Activated CD4-positive, alpha-beta T cell treated with anti-CD3 and anti-CD28 coated beads, Interleukin-2, amount 10 ng/mL, durations not matched to agents 7 days and 5 days (primary cell): ENCODE measurements at regions of chr17 and their contacts with region 1.

Region 1: GRCh38 chr17:63919311-63919723 is 678 bp upstream of the GH1 start:
- DNase-seq: peak; percentile 83
- H3K4me3 Mint-ChIP-seq: no peak overlapping the region
- H3K27ac Mint-ChIP-seq: no peak overlapping the region
- H3K4me1 Mint-ChIP-seq: peaks cover 7% of the 10 kb centered on the region
- H3K27me3 Mint-ChIP-seq: peaks cover 4% of the 10 kb centered on the region

Region 2: GRCh38 chr17:63931099-63931561 is 11.8 kb after region 1 on chr17:
- CTCF ChIA-PET with region 1: interaction called, 33 read pairs
- POLR2A ChIA-PET with region 1: no interaction called
- DNase-seq: peak; percentile 65
- H3K4me3 Mint-ChIP-seq: peak overlapping the region; percentile 95
- H3K27ac Mint-ChIP-seq: peak overlapping the region; percentile 95
- H3K4me1 Mint-ChIP-seq: peaks cover 30% of the 10 kb centered on the region
- H3K27me3 Mint-ChIP-seq: peaks cover 4% of the 10 kb centered on the region

Region 3: DNA sequence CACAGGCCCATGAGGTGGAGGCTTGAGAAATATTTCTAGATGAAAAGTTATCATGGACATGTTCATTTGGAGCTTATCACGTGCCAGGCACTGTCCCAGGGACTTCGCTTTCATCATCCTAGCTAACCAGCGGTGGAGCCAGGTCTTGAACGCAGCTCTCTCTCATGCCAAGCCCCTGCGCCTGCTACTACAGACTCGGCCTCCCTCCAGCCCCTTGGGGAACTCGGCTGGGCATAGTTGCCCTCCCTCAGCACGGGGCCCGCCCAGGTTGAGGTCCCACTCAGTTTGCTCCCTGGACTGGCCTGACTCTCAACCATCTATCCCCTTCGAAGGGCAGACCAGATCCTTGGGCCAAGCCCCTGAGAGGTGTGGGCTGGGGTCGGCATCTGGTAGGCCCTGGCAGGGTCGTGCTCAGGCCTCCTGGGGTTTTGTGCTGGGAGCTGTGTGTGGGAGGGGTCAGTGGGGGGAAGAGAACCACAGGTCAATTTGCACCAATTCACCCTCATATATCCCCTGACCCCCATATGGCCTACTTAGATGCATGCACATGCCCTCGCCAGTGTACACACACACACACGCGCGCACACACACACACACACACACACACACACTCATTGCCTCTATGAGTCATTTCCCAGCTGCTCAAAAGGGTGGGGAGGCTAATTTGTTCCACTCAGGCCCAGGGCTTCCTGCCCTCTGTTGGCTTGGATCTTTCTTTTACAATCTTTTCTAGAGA is 65.5 kb after region 1 on chr17:
- CTCF ChIA-PET with region 1: interaction called, 11 read pairs
- POLR2A ChIA-PET with region 1: no interaction called
- DNase-seq: peak; percentile 79
- H3K4me3 Mint-ChIP-seq: no peak overlapping the region
- H3K27ac Mint-ChIP-seq: peak overlapping the region; percentile 85
- H3K4me1 Mint-ChIP-seq: peaks cover 31% of the 10 kb centered on the region
- H3K27me3 Mint-ChIP-seq: no peaks in the 10 kb centered on the region